K562 (cell line): ENCODE measurements at regions of chr10 and their contacts with region 1.

Region 1: DNA sequence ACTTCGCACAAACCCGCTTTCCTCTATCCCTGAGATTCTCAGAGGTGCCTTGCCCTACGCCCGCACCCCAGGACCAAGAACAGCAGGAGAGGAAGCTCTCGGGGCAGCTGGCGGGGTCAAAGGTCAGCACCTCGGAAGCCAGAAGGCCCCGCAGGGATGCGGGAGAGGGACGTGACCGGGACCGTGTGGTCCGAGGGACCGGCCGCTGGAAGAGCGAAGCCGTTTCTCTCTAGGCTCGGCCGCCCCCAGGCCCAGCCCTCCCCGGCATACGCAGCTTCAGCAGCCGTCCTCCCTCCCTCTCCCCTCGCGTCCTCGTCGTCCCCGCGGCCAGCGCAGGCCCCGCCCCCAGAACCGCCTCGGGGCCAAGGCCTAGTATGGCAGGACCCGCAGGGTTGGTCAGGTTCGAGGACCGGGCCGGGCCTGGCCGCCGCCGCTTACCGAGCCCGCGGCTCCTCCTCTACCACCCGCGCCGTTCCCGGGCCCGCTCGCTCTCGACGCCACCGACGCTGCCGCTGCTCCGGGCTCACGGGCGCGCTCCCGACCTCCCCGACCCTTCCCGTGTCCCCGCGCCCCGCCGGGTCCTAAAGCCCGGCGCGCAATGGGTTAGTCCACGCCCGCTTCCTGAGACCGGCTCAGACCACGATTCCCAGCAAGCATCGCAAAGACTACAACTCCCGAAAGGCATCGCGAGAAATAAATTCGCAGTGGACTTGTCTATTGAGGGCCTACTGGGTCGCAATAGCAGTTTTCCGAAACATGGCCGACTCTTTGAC is at the start of gene ARMH3:
- DNase-seq: peak; percentile 85 to 96 (median 88)
- ATAC-seq: peak; percentile 97
- H3K4me3 ChIP-seq: peak within 1 kb of the TSS; percentile 81
- H3K27ac ChIP-seq: peak within 1 kb of the TSS; percentile 88
- H3K4me1 ChIP-seq: peaks cover 10 to 26% of the 10 kb centered on the region in 2 experiments; a peak in 4 of 5 replicates
- H3K27me3 ChIP-seq: no peaks in the 10 kb centered on the region
- CTCF ChIP-seq: no peak
- EP300 ChIP-seq: peak; percentile 22; the same call in 1 of the 2 replicates
- POLR2A ChIP-seq: peak; percentile 75
- RAD21 ChIP-seq: no peak
- polyA plus RNA-seq, gene ARMH3: not detected

Region 2: GRCh38 chr10:101060036-101060950 is 995.5 kb before region 1 on chr10:
- CTCF ChIA-PET with region 1: no interaction called
- POLR2A ChIA-PET with region 1: no interaction called
- in situ Hi-C with region 1: no loop called
- intact Hi-C with region 1: loop called (anchors 10 kb)
- DNase-seq: peak; percentile 44 to 91 (median 63)
- ATAC-seq: peak; percentile 58
- H3K4me3 ChIP-seq: peak overlapping the region; percentile 53
- H3K27ac ChIP-seq: peak overlapping the region; percentile 100
- H3K4me1 ChIP-seq: peaks cover 34 to 49% of the 10 kb centered on the region in 2 experiments
- H3K27me3 ChIP-seq: no peaks in the 10 kb centered on the region
- CTCF ChIP-seq: peak; percentile 82 to 87 (median 84)
- EP300 ChIP-seq: no peak
- POLR2A ChIP-seq: no peak; the same call in none of the 2 replicates
- RAD21 ChIP-seq: peak; percentile 71 to 82

Region 3: DNA sequence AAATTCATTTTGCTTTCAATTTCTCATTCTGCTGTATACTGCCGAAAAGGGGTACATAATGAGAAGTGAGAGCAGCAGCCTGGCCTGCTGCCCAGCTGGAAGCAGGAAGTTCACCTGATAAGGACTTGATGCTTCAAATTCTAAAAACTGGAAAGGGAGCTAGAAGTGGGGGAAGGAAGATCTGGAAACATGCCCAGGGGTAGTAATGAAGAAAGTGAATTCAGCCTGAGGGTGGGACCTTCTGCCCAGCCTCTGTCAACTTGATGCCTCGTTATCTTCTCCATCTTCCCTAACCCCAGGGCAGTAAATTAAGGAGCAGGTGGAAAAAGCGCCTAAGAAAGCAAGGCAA is 69.2 kb before region 1 on chr10:
- CTCF ChIA-PET with region 1: no interaction called
- POLR2A ChIA-PET with region 1: no interaction called
- in situ Hi-C with region 1: no loop called
- intact Hi-C with region 1: no loop called
- DNase-seq: no peak
- ATAC-seq: no peak
- H3K4me3 ChIP-seq: no peak overlapping the region
- H3K27ac ChIP-seq: no peak overlapping the region
- H3K4me1 ChIP-seq: no peaks in the 10 kb centered on the region
- H3K27me3 ChIP-seq: no peaks in the 10 kb centered on the region
- CTCF ChIP-seq: no peak
- EP300 ChIP-seq: no peak
- POLR2A ChIP-seq: no peak
- RAD21 ChIP-seq: no peak

Region 4: DNA sequence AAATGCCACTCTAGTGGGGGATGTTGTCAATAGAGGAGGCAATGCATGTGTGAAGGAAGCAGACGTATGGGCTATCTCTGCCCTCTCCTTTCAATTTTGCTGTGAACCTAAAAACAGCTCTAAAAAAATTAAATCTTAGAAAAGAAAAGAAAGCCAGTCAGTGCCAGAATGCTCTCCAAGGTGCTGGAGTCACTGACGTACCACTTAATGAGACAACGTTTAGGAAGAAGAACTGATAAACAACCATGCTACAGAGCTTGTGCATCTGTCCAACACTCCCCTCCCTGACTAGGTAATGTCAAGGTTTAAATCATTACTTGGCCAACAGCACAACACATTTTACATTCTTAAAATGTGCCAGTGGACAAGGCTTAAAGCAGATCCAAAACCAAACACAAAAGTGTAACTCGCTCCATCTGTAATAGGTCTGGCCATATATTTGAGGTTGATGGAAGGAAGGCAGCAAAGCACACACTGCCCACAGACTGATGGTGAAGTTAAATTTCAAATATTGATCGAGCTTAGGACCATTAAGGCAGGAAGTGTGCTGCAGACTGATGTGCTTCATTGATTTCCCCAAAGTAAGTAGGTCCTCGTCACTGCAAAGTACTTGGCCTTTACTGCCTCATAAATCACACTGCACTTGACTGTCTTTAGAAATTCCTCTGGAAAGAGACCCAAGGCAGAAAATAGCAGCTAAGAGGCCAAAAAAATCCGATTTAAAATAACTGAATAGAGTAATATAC is 15.4 kb before region 1 on chr10:
- CTCF ChIA-PET with region 1: no interaction called
- POLR2A ChIA-PET with region 1: interaction called, 10 read pairs
- in situ Hi-C with region 1: no loop called
- intact Hi-C with region 1: no loop called
- DNase-seq: peak in 3 of 4 experiments; percentile 2 to 4 (median 3)
- ATAC-seq: no peak
- H3K4me3 ChIP-seq: no peak overlapping the region
- H3K27ac ChIP-seq: no peak overlapping the region
- H3K4me1 ChIP-seq: no peaks in the 10 kb centered on the region; a peak in 3 of 5 replicates
- H3K27me3 ChIP-seq: no peaks in the 10 kb centered on the region
- CTCF ChIP-seq: no peak
- EP300 ChIP-seq: no peak
- POLR2A ChIP-seq: no peak
- RAD21 ChIP-seq: no peak

Region 5: DNA sequence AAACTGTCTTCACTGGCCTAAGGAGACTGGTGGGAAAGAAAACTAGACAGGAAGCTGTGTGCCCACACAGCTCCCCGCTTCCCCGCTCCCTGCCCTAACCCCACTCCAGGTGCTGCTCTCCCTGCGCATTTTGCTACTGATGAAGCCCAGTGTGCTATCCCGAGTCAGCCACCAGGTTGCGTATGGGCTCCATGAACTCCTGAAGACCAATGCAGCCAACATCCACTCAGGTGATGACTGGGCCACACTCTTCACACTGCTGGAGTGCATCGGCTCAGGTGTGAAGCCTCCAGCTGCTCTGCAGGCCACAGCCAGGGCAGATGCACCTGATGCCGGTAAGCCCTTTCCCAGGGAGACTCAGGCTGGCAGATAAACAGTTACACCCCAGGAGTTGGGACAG is 319.4 kb after region 1 on chr10:
- CTCF ChIA-PET with region 1: no interaction called
- POLR2A ChIA-PET with region 1: no interaction called
- in situ Hi-C with region 1: no loop called
- intact Hi-C with region 1: no loop called
- DNase-seq: no peak
- ATAC-seq: peak; percentile 55
- H3K4me3 ChIP-seq: no peak overlapping the region
- H3K27ac ChIP-seq: no peak overlapping the region
- H3K4me1 ChIP-seq: no peaks in the 10 kb centered on the region
- H3K27me3 ChIP-seq: no peaks in the 10 kb centered on the region
- CTCF ChIP-seq: peak in 2 of 3 experiments; percentile 13 to 19; a peak in 1 of 6 replicates
- EP300 ChIP-seq: no peak
- POLR2A ChIP-seq: no peak
- RAD21 ChIP-seq: no peak; a peak in 1 of 4 replicates